B cell (primary cell): ENCODE measurements at regions of chr2 and their contacts with region 1.

Region 1: GRCh38 chr2:215920244-215921100 is 92.9 kb downstream of the MREG start:
- DNase-seq: peak; percentile 70
- ATAC-seq: peak; percentile 56
- H3K4me3 ChIP-seq: no peak overlapping the region
- H3K4me3 Mint-ChIP-seq: no peak overlapping the region
- H3K27ac ChIP-seq: no peak overlapping the region
- H3K27ac Mint-ChIP-seq: no peak overlapping the region
- H3K4me1 ChIP-seq: no peaks in the 10 kb centered on the region
- H3K4me1 Mint-ChIP-seq: no peaks in the 10 kb centered on the region
- H3K27me3 ChIP-seq: no peaks in the 10 kb centered on the region
- H3K27me3 Mint-ChIP-seq: peaks cover 23% of the 10 kb centered on the region
- CTCF ChIP-seq: peak; percentile 88

Region 2: GRCh38 chr2:214310319-214310718 is 1610.2 kb before region 1 on chr2:
- CTCF ChIA-PET with region 1: no interaction called
- POLR2A ChIA-PET with region 1: no interaction called
- intact Hi-C with region 1: loop called (anchors 5 kb)
- DNase-seq: no peak
- ATAC-seq: no peak
- H3K4me3 ChIP-seq: no peak overlapping the region
- H3K4me3 Mint-ChIP-seq: no peak overlapping the region
- H3K27ac ChIP-seq: no peak overlapping the region
- H3K27ac Mint-ChIP-seq: no peak overlapping the region
- H3K4me1 ChIP-seq: no peaks in the 10 kb centered on the region
- H3K4me1 Mint-ChIP-seq: no peaks in the 10 kb centered on the region
- H3K27me3 ChIP-seq: no peaks in the 10 kb centered on the region
- H3K27me3 Mint-ChIP-seq: no peaks in the 10 kb centered on the region
- CTCF ChIP-seq: no peak

Region 3: DNA sequence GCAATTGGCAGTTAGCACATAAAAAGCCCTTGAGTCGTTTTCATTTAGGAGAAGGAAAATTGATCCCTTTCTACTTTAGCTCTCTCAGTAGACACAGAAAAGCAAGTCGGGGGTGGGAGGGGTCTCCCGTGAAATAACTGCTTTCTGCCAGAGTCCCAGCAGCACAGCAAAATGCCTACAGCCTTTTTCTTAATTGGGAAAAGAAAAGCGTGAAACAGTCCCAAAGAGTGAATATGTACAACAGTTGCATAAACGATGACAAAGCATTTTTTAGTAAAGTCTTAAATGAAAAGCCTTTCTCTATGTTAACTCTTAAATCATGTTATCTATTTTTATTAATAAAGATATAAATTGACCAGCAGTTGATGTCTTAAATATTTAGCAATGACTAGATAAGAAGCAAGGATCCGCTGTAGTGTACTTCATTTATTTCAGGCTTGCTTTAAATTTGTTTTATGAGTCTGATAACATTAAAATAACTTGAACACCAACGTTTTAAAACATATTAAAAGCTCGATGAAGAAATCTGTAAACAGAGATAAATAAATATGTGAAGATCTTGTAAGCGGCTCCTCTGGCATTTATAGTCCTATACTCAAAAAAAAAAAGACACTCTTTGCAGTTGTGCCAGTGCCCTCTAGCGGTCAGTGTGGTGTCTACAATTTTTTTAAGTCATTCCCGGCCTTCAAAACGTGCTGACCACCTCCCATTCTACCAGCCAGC is 650.9 kb before region 1 on chr2:
- CTCF ChIA-PET with region 1: interaction called, 4 read pairs
- POLR2A ChIA-PET with region 1: no interaction called
- intact Hi-C with region 1: loop called (anchors 2 kb)
- DNase-seq: peak; percentile 74
- ATAC-seq: peak; percentile 61
- H3K4me3 ChIP-seq: no peak overlapping the region
- H3K4me3 Mint-ChIP-seq: no peak overlapping the region
- H3K27ac ChIP-seq: no peak overlapping the region
- H3K27ac Mint-ChIP-seq: no peak overlapping the region
- H3K4me1 ChIP-seq: no peaks in the 10 kb centered on the region
- H3K4me1 Mint-ChIP-seq: no peaks in the 10 kb centered on the region
- H3K27me3 ChIP-seq: no peaks in the 10 kb centered on the region
- H3K27me3 Mint-ChIP-seq: no peaks in the 10 kb centered on the region
- CTCF ChIP-seq: peak; percentile 94

Region 4: DNA sequence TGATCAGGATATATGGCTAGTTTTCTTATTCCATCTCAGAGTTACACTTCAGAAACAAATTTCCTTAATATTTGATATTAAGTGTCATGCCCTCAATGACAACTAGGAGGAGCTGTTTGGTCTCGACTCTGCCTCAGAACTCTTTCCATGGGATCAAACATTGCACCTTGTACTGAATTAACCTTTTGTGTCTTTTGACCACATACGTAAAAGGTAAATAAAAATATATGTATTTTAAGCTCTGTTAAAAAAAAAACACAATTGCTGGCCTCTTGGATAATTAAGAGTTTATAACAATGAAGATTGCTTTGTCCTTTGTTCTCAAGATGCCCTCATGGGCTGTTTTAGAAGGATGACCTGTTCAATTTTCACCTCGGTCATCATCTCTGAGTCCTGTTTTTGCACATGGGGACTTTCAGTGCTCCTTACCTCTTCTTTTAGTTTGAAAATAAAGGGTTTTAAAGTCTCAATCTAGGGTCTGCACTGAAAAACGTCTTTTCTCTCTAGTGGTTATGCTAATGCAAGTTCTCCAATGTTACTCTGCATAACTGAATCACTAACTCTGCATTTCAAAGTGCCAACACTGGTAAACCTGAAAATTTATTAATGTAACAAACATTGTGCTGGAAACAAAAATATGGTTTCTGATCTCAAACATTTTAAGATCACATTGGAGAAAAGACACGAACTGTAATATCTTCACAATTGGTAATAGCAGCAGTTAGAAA is 465.8 kb before region 1 on chr2:
- CTCF ChIA-PET with region 1: interaction called, 28 read pairs
- POLR2A ChIA-PET with region 1: no interaction called
- intact Hi-C with region 1: loop called (anchors 1 kb)
- DNase-seq: peak; percentile 41
- ATAC-seq: no peak
- H3K4me3 ChIP-seq: no peak overlapping the region
- H3K4me3 Mint-ChIP-seq: no peak overlapping the region
- H3K27ac ChIP-seq: no peak overlapping the region
- H3K27ac Mint-ChIP-seq: no peak overlapping the region
- H3K4me1 ChIP-seq: no peaks in the 10 kb centered on the region
- H3K4me1 Mint-ChIP-seq: no peaks in the 10 kb centered on the region
- H3K27me3 ChIP-seq: peaks cover 0 to 5% (median 2%) of the 10 kb centered on the region in 4 experiments
- H3K27me3 Mint-ChIP-seq: peaks cover 25% of the 10 kb centered on the region
- CTCF ChIP-seq: peak; percentile 95

Region 5: DNA sequence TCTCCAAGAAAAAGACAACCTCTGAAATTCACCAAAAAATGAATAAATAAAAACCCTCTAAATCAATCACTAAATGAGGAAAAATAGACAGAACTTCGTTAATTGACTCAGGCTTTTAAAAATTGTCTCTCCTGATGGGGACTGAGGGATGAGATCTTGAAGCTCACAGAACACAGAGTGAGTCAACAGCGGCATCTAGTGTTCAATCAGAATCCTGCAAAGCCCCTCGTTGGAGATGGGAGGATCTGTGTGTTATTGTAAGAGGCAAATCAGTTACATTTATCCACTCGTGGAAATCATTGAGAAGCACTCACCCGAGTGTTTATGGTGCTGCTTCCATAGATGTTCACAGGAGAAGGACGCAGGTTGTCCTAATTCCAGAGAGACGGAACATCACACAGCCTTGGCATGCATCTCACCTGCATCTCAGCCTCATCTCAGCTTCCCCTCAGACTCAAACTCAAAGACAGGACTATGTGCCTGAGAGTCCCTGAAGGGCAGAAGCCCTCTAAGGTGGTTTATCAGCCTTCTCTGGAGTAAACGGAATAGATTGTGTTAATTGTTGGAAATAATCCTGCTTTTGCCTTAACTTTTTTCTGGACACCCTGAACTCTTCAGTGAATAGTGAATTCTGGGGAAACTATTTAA is 10.9 kb after region 1 on chr2:
- CTCF ChIA-PET with region 1: interaction called, 11 read pairs
- POLR2A ChIA-PET with region 1: no interaction called
- intact Hi-C with region 1: no loop called
- DNase-seq: peak; percentile 63
- ATAC-seq: peak; percentile 72
- H3K4me3 ChIP-seq: no peak overlapping the region
- H3K4me3 Mint-ChIP-seq: no peak overlapping the region
- H3K27ac ChIP-seq: no peak overlapping the region
- H3K27ac Mint-ChIP-seq: no peak overlapping the region
- H3K4me1 ChIP-seq: no peaks in the 10 kb centered on the region
- H3K4me1 Mint-ChIP-seq: no peaks in the 10 kb centered on the region
- H3K27me3 ChIP-seq: no peaks in the 10 kb centered on the region
- H3K27me3 Mint-ChIP-seq: peaks cover 5% of the 10 kb centered on the region
- CTCF ChIP-seq: peak; percentile 96